HEK293T (cell line): ENCODE measurements at regions of chr3 and their contacts with region 1.

Region 1: GRCh38 chr3:5057857-5058324 is 64.2 kb upstream of the ARL8B start:
- DNase-seq: peak; percentile 59

Region 2: DNA sequence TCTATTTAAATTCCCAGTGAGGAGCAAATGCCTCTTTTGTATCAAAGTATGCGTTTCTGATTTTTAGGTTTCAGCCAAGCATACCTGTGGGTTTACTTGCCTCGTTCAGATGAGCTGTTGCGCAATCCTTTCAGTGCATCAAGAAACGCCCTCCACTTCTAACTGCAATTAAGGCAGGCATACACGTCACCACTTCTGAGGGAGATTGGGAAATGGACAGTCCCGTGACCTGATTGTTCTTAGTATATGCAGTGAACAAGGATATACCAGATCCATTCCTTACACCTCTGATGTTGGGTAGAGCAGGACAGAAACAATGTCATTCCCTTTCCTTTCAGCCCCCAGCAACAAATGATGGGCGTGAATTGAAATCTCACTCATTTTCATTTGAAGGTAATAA is 345.7 kb before region 1 on chr3:
- CTCF ChIA-PET with region 1: interaction called, 17 read pairs
- POLR2A ChIA-PET with region 1: interaction called, 3 read pairs
- DNase-seq: no peak

Region 3: GRCh38 chr3:4720279-4721075 is 337.4 kb before region 1 on chr3:
- CTCF ChIA-PET with region 1: interaction called, 19 read pairs
- POLR2A ChIA-PET with region 1: no interaction called
- DNase-seq: peak; percentile 38

Region 4: DNA sequence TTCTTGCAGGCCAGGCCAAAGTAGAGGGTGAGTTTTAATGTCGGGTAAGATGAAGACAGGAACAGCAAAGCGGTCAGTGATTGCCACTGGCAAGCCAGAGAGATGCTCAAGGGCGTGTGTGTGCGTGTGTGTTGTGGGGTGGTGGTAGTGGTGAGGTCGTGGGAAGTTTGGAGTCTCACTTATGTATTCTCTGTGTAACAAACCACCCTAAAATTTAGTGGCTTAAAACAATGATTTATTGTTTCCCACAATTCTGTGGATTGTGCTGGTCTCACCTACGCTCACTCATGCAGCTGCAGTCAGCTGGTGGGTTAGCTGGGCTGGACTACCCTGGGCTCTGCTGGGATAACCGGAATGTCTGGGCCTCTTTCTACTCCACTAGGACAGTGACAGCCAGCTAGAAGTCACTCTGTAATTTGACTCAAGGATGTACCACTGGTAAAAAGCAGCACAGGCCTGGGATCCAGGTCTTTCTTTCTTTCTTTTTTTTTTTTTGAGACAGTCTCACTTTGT is 129.6 kb before region 1 on chr3:
- CTCF ChIA-PET with region 1: no interaction called
- POLR2A ChIA-PET with region 1: no interaction called
- DNase-seq: no peak

Region 5: GRCh38 chr3:5122030-5122740 is 64.3 kb after region 1 on chr3 and contains the start of gene ARL8B:
- CTCF ChIA-PET with region 1: no interaction called
- POLR2A ChIA-PET with region 1: no interaction called
- DNase-seq: peak; percentile 87

Region 6: GRCh38 chr3:5226783-5227182 is 168.9 kb after region 1 on chr3:
- CTCF ChIA-PET with region 1: no interaction called
- POLR2A ChIA-PET with region 1: no interaction called
- DNase-seq: no peak